Calu3 (cell line): ENCODE measurements at regions of chr6 and their contacts with region 1.

Region 1: DNA sequence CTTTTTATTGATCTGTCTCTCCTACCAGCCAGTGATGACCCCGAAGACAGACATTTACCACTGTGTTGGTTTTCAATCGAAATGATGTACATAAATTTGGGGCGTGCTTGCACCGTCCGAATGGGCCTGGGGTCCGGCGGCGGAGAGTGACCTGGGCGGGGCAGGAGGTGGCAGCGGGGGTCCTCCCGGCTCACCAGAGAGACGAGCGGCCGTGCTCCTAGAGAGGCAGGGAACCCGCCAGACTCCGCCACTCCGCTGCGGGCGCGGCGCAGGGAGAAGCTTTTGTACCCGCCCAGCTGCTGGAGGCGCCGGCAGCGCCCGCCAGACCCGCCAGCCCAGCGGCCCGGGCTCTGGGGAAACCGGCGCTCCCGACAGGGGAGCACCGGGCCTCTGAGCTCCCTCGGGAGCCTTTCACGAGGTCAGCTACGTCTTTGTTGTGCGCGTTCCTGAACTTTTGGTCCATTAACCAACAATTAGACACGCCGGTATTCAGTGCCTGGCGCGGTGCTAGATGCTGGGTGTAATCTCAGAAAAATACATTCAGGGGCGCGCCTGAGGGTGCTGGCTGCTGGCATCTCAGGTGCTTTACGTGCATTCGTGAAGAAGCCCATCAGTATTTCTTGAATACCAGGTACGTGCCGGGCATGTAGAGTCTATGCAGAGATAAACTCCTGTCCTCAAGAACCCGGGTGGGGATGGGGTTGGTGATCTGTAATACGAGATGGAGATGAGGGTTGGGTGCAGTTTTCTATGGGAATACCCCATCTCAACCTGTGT is at the start of gene PGBD1:
- DNase-seq: peak; percentile 86
- H3K4me3 Mint-ChIP-seq: peak within 1 kb of the TSS; percentile 91
- H3K27ac Mint-ChIP-seq: peak within 1 kb of the TSS; percentile 53
- H3K4me1 Mint-ChIP-seq: peaks cover 10% of the 10 kb centered on the region
- H3K27me3 Mint-ChIP-seq: no peaks in the 10 kb centered on the region
- CTCF ChIP-seq: no peak
- total RNA-seq, gene PGBD1: 3.1 and 4.9 TPM in 2 replicates

Region 2: DNA sequence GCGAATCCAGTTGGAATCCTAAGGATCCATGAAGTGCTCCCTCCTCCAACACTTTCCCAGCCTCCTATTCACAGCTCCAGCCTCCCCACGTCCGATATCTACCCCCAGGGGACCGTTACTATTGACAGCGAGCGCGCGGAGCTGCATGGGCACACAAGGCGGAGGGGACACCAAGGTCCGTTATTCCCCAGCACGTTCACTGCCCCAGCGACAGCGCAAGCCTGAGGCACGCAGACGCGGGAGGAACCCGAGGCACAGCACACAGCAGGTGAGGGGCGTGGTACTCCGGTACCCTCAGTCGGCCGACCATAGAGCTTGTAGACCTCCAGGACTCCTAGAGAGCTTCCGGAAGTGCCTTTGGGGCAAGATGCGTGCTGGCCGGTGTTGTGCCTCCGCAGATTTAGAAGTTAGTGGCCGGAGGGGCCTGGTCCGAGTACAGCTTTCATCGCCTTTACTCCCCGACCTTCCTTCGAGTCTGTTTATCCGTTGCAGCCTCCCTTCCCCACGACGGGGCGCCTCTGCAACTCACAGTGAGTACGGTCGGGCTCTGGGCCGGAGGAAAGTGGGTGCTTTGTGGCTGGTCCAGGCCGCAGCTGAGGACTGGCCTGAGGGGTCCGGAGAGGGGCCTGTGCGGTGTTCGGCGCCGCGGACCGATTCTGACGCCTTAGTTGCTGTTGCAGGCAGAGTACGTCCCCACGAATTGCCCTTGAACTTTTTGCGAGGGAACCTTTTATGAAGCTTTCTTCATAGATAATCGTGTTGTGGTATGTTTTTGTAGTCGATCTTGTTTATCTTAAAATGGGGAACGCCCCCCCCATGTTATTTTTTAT is 139.8 kb before region 1 on chr6 and contains the start of gene ZKSCAN8:
- CTCF ChIA-PET with region 1: no interaction called
- intact Hi-C with region 1: no loop called
- DNase-seq: peak; percentile 89
- H3K4me3 Mint-ChIP-seq: peak within 1 kb of the TSS; percentile 91
- H3K27ac Mint-ChIP-seq: peak within 1 kb of the TSS; percentile 75
- H3K4me1 Mint-ChIP-seq: peaks cover 41% of the 10 kb centered on the region
- H3K27me3 Mint-ChIP-seq: no peaks in the 10 kb centered on the region
- CTCF ChIP-seq: no peak
- total RNA-seq, gene ZKSCAN8: 23.2 and 27.5 TPM in 2 replicates

Region 3: GRCh38 chr6:28252009-28252975 is 29.2 kb before region 1 on chr6 and contains the start of gene ZKSCAN4:
- CTCF ChIA-PET with region 1: interaction called, 3 read pairs
- intact Hi-C with region 1: loop called (anchors 2 kb)
- DNase-seq: peak; percentile 84
- H3K4me3 Mint-ChIP-seq: peak within 1 kb of the TSS; percentile 100
- H3K27ac Mint-ChIP-seq: peak within 1 kb of the TSS; percentile 64
- H3K4me1 Mint-ChIP-seq: peaks cover 10% of the 10 kb centered on the region
- H3K27me3 Mint-ChIP-seq: no peaks in the 10 kb centered on the region
- CTCF ChIP-seq: no peak
- total RNA-seq, gene ZKSCAN4: 6.1 and 6.7 TPM in 2 replicates

Region 4: DNA sequence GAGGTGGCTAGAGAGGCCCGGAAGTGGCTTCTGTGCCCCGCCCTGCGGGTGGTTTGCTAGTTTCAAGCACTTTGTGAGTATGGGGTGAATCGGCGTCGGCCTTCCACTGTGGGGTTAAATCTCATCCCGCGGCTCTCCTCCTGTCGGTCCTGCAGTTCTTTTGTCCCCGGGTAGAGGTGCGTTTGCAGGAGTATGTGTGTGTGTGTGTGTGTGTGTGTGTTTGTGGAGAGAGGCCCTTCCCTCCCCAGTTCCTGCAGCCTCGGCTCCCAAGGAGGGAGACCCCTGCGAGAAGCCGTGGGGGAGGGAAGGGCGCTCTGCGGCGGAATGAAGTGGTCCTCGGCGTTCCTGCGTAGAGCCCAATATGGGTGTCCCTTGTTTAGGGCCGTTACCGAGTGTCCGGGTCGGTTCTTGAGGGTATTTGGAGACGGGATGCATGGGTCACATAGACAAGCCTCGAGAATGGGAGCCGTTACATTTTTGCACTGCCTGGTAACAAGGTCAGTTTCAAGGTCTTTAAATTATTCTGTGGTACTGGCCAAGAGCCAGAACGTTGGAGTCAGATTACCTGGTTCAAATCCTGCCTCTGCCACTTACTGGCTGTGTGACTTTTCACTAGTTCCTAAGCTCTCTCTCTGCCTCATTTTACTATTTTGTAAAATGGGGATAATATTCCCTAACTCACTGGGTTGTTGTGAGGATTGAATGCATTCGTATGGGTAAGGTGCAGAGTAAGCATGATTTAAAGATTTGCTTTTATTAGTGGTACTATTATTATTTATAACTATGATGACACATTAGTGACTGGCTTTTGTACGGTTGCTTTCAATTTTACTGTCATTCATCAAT is 68.6 kb after region 1 on chr6 and contains the start of gene ZKSCAN3:
- CTCF ChIA-PET with region 1: interaction called, 10 read pairs
- intact Hi-C with region 1: loop called (anchors 5 kb)
- DNase-seq: peak; percentile 84
- H3K4me3 Mint-ChIP-seq: peak within 1 kb of the TSS; percentile 100
- H3K27ac Mint-ChIP-seq: peak within 1 kb of the TSS; percentile 96
- H3K4me1 Mint-ChIP-seq: peaks cover 25% of the 10 kb centered on the region
- H3K27me3 Mint-ChIP-seq: peaks cover 28% of the 10 kb centered on the region
- CTCF ChIP-seq: no peak
- total RNA-seq, gene ZKSCAN3: 7.3 and 7.8 TPM in 2 replicates